HEK293 (cell line): ENCODE measurements at regions of chr22 and their contacts with region 1.

Region 1: DNA sequence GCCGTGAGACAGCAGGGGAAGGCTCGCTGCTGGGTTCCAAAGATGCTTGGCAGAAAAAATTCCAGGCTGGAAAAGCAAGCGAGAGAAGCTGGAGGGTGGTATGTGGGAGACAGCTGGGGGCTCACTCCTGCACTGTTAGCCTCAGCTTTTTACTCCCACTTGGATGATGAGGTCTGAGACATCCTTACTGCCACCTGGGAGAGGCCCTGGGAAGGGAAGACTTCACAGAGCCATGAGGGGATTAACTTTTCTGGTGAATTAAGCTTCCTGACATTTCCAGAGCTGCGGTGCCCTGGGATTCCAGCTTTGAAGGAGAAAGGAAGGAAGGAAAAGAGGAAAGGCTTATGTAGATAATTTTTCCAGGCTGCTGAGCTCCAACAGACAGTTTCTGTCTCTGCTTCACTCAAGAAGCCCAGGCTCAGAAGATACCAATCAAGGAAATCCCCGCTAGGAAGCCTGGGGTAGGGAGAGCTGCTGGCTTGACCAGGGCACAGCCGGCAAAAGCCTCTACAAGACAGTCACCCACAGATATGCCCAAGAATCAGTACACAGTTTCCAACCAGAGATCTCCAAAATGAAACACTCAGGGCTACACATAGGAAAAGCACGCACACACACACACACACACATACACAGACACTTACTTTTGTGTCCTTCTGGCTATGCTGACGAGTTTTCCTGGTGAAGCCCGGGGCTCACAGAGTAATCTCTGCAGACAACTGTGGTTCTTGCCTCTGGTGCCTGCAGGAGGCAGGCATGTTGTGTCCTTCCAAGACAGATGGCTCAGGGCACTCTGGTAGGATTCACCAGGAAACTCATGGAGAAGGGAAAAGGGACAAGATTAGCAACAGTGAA is 907 bp downstream of the MCHR1 start:
- H3K4me3 ChIP-seq: no peak overlapping the region
- H3K27ac ChIP-seq: no peak overlapping the region
- H3K4me1 ChIP-seq: no peaks in the 10 kb centered on the region; the same call in 1 of the 2 replicates
- CTCF ChIP-seq: no peak

Region 2: GRCh38 chr22:40541300-40541699 is 138.9 kb before region 1 on chr22:
- CTCF ChIA-PET with region 1: no interaction called
- POLR2A ChIA-PET with region 1: no interaction called
- H3K4me3 ChIP-seq: no peak overlapping the region
- H3K27ac ChIP-seq: no peak overlapping the region
- H3K4me1 ChIP-seq: peaks cover 7% of the 10 kb centered on the region; the same call in 1 of the 2 replicates
- CTCF ChIP-seq: no peak

Region 3: GRCh38 chr22:40603088-40603605 is 77.0 kb before region 1 on chr22:
- CTCF ChIA-PET with region 1: no interaction called
- POLR2A ChIA-PET with region 1: no interaction called
- H3K4me3 ChIP-seq: no peak overlapping the region
- H3K27ac ChIP-seq: 0 out of 2 replicates have a peak overlapping the region, but pooled peaks have one; percentile 27
- H3K4me1 ChIP-seq: peaks cover 39% of the 10 kb centered on the region
- CTCF ChIP-seq: no peak

Region 4: GRCh38 chr22:40660730-40661129 is 19.5 kb before region 1 on chr22:
- CTCF ChIA-PET with region 1: no interaction called
- POLR2A ChIA-PET with region 1: no interaction called
- H3K4me3 ChIP-seq: no peak overlapping the region
- H3K27ac ChIP-seq: no peak overlapping the region
- H3K4me1 ChIP-seq: no peaks in the 10 kb centered on the region
- CTCF ChIP-seq: no peak

Region 5: DNA sequence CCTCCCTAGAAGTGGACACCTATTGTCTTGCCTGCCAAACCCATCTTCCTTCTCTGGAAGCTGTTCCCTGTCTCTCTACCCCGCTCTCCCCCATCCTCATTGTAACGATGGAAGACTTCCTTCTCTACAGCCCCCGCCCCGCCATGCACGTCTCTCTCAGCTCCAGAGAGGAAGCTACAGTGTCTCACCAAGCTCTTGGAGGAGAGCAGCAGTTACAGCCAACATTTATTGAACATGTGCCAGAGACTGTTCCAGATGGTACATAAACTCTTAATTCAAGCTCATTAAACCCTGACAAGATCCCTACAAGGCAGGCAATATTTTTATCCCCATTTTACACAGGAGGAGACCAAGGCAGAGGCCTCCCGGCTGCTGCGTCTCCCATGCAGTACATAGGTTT is 14.2 kb after region 1 on chr22:
- CTCF ChIA-PET with region 1: interaction called, 13 read pairs
- POLR2A ChIA-PET with region 1: interaction called, 6 read pairs
- H3K4me3 ChIP-seq: no peak overlapping the region
- H3K27ac ChIP-seq: no peak overlapping the region
- H3K4me1 ChIP-seq: no peaks in the 10 kb centered on the region
- CTCF ChIP-seq: no peak

Region 6: GRCh38 chr22:40714192-40714951 is 34.2 kb after region 1 on chr22:
- CTCF ChIA-PET with region 1: interaction called, 15 read pairs
- POLR2A ChIA-PET with region 1: interaction called, 9 read pairs
- H3K4me3 ChIP-seq: peak overlapping the region; percentile 4
- H3K27ac ChIP-seq: peak overlapping the region; percentile 71
- H3K4me1 ChIP-seq: peaks cover 32% of the 10 kb centered on the region
- CTCF ChIP-seq: no peak

Region 7: GRCh38 chr22:40739721-40740120 is 59.5 kb after region 1 on chr22:
- CTCF ChIA-PET with region 1: interaction called, 11 read pairs
- POLR2A ChIA-PET with region 1: interaction called, 3 read pairs
- H3K4me3 ChIP-seq: no peak overlapping the region
- H3K27ac ChIP-seq: no peak overlapping the region; the same call in 1 of the 2 replicates
- H3K4me1 ChIP-seq: 0 out of 2 replicates have a peak, but pooled peaks cover 2% of the 10 kb centered on the region
- CTCF ChIP-seq: no peak

Region 8: GRCh38 chr22:40757071-40757470 is 76.9 kb after region 1 on chr22:
- CTCF ChIA-PET with region 1: interaction called, 86 read pairs
- POLR2A ChIA-PET with region 1: interaction called, 3 read pairs
- H3K4me3 ChIP-seq: no peak overlapping the region
- H3K27ac ChIP-seq: no peak overlapping the region
- H3K4me1 ChIP-seq: no peaks in the 10 kb centered on the region
- CTCF ChIP-seq: no peak

Region 9: DNA sequence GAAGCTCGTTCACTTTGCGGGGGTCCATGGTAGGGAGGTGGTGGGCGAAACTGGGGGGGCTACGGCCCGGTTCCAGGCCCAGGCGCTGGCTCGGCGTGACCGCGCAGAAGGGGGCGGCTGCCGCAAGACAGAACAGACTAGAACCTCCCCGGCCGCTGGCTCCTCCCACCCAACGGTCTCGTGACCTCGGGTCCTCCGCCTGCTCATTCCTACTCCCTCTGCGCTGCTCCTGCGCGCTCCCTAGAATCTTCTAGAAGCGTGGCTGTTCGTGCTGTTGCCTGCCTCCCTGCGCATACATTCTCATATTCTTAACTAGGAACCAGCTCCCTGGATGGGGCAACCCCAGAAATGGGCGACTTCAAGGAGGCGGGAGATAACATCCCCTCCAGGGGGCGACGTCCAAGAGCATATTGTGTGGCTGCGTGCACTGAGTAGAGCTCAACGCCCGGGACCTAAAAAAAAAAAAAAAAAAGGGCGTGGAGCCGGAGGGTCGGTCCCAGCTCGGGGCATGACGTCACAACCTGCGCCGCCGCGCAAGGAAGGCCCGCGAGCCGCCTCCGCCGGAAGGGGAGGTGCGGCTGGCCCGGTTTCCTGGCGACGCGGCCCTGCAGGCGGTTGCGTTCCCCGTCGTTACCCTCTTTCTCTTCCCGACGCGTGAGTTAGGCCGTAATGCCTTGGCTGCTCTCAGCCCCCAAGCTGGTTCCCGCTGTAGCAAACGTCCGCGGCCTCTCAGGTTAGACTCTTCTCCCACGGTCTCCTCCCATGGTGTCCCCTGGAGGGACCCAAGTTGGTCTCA is 176.5 kb after region 1 on chr22 and contains the starts of genes ST13 and XPNPEP3:
- CTCF ChIA-PET with region 1: interaction called, 20 read pairs
- POLR2A ChIA-PET with region 1: interaction called, 13 read pairs
- H3K4me3 ChIP-seq: peak within 1 kb of the TSS; percentile 53
- H3K27ac ChIP-seq: peak within 1 kb of the TSS; percentile 98
- H3K4me1 ChIP-seq: peaks cover 19% of the 10 kb centered on the region
- CTCF ChIP-seq: peak; percentile 46; the same call in 1 of the 2 replicates